ENCODE measurements at regions of chrX and their contacts with region 1.

Region 1: GRCh38 chrX:101931488-101932248 is at the start of gene ZMAT1:
- DNase-seq: peak; percentile 83 to 95 (median 93)
- ATAC-seq: peak; percentile 82
- H3K4me3 ChIP-seq: peak within 1 kb of the TSS; percentile 48 to 60
- H3K4me3 Mint-ChIP-seq: peak within 1 kb of the TSS; percentile 88
- H3K27ac ChIP-seq: peak within 1 kb of the TSS; percentile 59 to 82
- H3K27ac Mint-ChIP-seq: peak within 1 kb of the TSS; percentile 96
- H3K4me1 ChIP-seq: peaks cover 7% of the 10 kb centered on the region
- H3K4me1 Mint-ChIP-seq: peaks cover 31% of the 10 kb centered on the region
- H3K27me3 ChIP-seq: no peaks in the 10 kb centered on the region
- H3K27me3 Mint-ChIP-seq: no peaks in the 10 kb centered on the region
- CTCF ChIP-seq: no peak
- total RNA-seq, gene ZMAT1: 15.2 to 15.7 TPM

Region 2: GRCh38 chrX:100819837-100820666 is 1111.6 kb before region 1 on chrX and contains the start of gene CSTF2:
- CTCF ChIA-PET with region 1: no interaction called
- POLR2A ChIA-PET with region 1: no interaction called
- intact Hi-C with region 1: loop called (anchors 2 to 10 kb)
- DNase-seq: peak; percentile 53 to 90 (median 78)
- ATAC-seq: peak; percentile 95
- H3K4me3 ChIP-seq: peak within 1 kb of the TSS; percentile 65 to 83
- H3K4me3 Mint-ChIP-seq: peak within 1 kb of the TSS; percentile 90
- H3K27ac ChIP-seq: peak within 1 kb of the TSS; percentile 87 to 92
- H3K27ac Mint-ChIP-seq: peak within 1 kb of the TSS; percentile 90
- H3K4me1 ChIP-seq: no peaks in the 10 kb centered on the region
- H3K4me1 Mint-ChIP-seq: peaks cover 18% of the 10 kb centered on the region
- H3K27me3 ChIP-seq: no peaks in the 10 kb centered on the region
- H3K27me3 Mint-ChIP-seq: peaks cover 4% of the 10 kb centered on the region
- CTCF ChIP-seq: no peak
- total RNA-seq, gene CSTF2: 10.1 to 10.6 TPM

Region 3: GRCh38 chrX:100850317-100850716 is 1081.4 kb before region 1 on chrX:
- CTCF ChIA-PET with region 1: no interaction called
- POLR2A ChIA-PET with region 1: no interaction called
- intact Hi-C with region 1: no loop called
- DNase-seq: no peak
- ATAC-seq: no peak
- H3K4me3 ChIP-seq: no peak overlapping the region
- H3K4me3 Mint-ChIP-seq: no peak overlapping the region
- H3K27ac ChIP-seq: no peak overlapping the region
- H3K27ac Mint-ChIP-seq: no peak overlapping the region
- H3K4me1 ChIP-seq: no peaks in the 10 kb centered on the region
- H3K4me1 Mint-ChIP-seq: no peaks in the 10 kb centered on the region
- H3K27me3 ChIP-seq: no peaks in the 10 kb centered on the region
- H3K27me3 Mint-ChIP-seq: no peaks in the 10 kb centered on the region
- CTCF ChIP-seq: no peak

Region 4: DNA sequence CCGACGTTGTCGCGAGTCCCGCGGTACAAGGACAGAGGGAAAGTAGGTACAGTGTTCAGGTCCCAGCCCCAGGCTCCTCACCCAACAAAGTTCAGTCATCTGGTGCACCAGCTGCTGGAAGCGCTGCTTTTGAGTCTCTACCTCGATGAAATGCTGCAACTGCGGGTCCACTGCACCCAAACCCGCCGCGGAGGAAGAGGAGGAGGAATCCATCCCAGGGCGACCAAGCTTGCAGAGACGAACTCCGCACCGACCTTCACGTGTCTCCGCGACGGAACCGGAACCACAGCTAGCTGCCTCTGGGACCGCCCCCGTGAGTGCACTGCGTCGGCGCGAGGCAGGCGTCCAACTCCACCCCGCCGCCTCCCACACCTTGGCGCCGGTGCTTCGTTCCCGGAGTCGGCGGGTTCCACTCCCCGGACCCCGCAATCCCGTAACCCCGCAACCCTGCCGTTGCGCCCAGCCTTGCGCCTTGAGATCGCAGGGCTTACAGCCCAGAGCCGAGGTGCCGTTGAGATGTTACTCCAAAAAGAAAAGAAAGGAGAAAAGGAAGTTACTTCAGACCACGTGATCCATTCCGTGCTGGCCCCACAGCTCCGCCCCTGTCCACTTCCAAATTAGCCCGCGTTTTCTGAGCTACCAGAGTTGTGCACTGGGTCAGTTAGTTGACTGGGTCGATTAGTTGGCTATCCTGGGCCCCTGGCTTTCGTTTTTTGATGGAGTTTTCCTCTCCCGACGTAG is 583.0 kb before region 1 on chrX and contains the start of gene TIMM8A:
- CTCF ChIA-PET with region 1: no interaction called
- POLR2A ChIA-PET with region 1: no interaction called
- intact Hi-C with region 1: loop called in 1 of 2 experiments (anchors 5 kb)
- DNase-seq: peak; percentile 50 to 85 (median 77)
- ATAC-seq: peak; percentile 98
- H3K4me3 ChIP-seq: peak within 1 kb of the TSS; percentile 90 to 97
- H3K4me3 Mint-ChIP-seq: peak within 1 kb of the TSS; percentile 91
- H3K27ac ChIP-seq: peak within 1 kb of the TSS; percentile 78 to 90
- H3K27ac Mint-ChIP-seq: peak within 1 kb of the TSS; percentile 91
- H3K4me1 ChIP-seq: peaks cover 9% of the 10 kb centered on the region
- H3K4me1 Mint-ChIP-seq: peaks cover 16% of the 10 kb centered on the region
- H3K27me3 ChIP-seq: no peaks in the 10 kb centered on the region
- H3K27me3 Mint-ChIP-seq: no peaks in the 10 kb centered on the region
- CTCF ChIP-seq: no peak
- total RNA-seq, gene TIMM8A: 7.0 to 8.1 TPM

Region 5: DNA sequence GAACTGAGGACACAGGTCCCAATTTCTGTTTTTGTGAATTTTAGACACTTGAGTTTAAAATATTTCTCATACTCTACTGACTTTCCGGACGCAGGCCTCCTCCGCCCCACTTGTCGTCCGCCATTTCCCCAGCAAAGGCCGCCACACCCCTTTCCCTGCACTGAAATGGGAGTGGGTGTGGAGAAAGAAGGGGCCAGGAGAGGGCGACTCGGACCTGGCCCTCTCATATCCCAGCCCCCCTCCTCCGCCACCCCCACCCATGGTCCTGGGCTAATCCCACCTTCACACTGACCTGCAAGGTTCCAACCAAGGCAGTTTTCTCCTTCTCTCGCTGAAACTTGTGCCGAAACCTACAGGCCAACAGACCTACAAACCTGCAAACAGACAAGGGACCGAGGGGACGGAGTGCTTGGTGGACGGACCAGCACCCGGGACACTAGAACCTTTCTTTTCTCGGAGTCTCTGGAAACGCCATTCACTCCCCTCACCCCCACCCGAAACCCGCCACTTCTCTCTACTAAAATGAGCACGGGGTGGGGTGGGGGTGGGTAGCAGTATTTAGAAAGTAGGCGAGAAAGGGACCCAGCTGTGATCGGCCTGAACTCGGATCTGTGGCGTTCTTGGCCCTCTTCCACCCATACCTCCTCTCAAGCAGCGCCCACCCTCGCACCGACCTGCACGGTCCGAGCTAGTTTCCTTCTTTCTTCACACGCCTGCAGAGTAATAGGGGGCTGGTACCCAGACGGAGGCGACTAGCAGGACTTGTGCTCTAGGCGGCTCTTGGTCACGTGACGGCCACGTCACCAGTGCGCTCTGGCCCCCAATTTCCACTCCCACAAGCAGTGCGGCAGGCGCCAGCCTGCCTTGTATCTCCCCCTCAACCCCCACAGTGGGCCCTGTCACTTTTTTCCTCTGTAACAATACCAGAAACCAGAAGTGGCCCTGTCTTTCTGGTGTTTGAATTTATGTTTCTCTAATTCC is 314.2 kb before region 1 on chrX and contains the start of gene ARMCX6:
- CTCF ChIA-PET with region 1: no interaction called
- POLR2A ChIA-PET with region 1: no interaction called
- intact Hi-C with region 1: loop called in 1 of 2 experiments (anchors 5 kb)
- DNase-seq: peak; percentile 36 to 90 (median 72)
- ATAC-seq: peak; percentile 80
- H3K4me3 ChIP-seq: peak within 1 kb of the TSS; percentile 62 to 74
- H3K4me3 Mint-ChIP-seq: peak within 1 kb of the TSS; percentile 91
- H3K27ac ChIP-seq: peak within 1 kb of the TSS; percentile 59 to 63
- H3K27ac Mint-ChIP-seq: peak within 1 kb of the TSS; percentile 93
- H3K4me1 ChIP-seq: peaks cover 11% of the 10 kb centered on the region
- H3K4me1 Mint-ChIP-seq: peaks cover 16% of the 10 kb centered on the region
- H3K27me3 ChIP-seq: no peaks in the 10 kb centered on the region
- H3K27me3 Mint-ChIP-seq: no peaks in the 10 kb centered on the region
- CTCF ChIP-seq: no peak
- total RNA-seq, gene ARMCX6: 45.6 to 46.4 TPM

Region 6: GRCh38 chrX:101744085-101744484 is 187.6 kb before region 1 on chrX:
- CTCF ChIA-PET with region 1: no interaction called
- POLR2A ChIA-PET with region 1: no interaction called
- intact Hi-C with region 1: no loop called
- DNase-seq: no peak
- ATAC-seq: no peak
- H3K4me3 ChIP-seq: no peak overlapping the region
- H3K4me3 Mint-ChIP-seq: no peak overlapping the region
- H3K27ac ChIP-seq: no peak overlapping the region
- H3K27ac Mint-ChIP-seq: no peak overlapping the region
- H3K4me1 ChIP-seq: no peaks in the 10 kb centered on the region
- H3K4me1 Mint-ChIP-seq: no peaks in the 10 kb centered on the region
- H3K27me3 ChIP-seq: no peaks in the 10 kb centered on the region
- H3K27me3 Mint-ChIP-seq: peaks cover 7% of the 10 kb centered on the region
- CTCF ChIP-seq: no peak

Region 7: DNA sequence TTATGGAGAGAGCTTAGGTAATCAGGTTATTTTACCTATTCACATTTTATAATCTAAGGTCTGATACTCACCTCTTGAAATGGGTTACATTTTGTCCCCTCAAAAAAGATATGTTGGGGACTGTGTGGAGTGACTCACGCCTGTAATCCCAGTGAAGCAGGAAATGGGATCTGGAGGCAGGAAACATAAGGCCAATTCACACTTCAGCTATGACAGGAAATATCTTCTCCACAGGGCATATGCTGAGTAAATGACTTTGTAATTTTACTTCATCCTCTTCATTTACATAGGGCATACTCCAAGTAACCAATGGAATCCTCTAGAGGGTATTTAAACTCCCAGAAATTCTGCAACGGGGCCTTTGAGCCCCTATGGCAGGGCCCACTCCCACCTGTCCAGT is 54.9 kb after region 1 on chrX:
- CTCF ChIA-PET with region 1: no interaction called
- POLR2A ChIA-PET with region 1: no interaction called
- intact Hi-C with region 1: no loop called
- DNase-seq: no peak
- ATAC-seq: no peak
- H3K4me3 ChIP-seq: no peak overlapping the region
- H3K4me3 Mint-ChIP-seq: no peak overlapping the region
- H3K27ac ChIP-seq: no peak overlapping the region
- H3K27ac Mint-ChIP-seq: no peak overlapping the region
- H3K4me1 ChIP-seq: no peaks in the 10 kb centered on the region
- H3K4me1 Mint-ChIP-seq: no peaks in the 10 kb centered on the region
- H3K27me3 ChIP-seq: no peaks in the 10 kb centered on the region
- H3K27me3 Mint-ChIP-seq: no peaks in the 10 kb centered on the region
- CTCF ChIP-seq: no peak

Region 8: DNA sequence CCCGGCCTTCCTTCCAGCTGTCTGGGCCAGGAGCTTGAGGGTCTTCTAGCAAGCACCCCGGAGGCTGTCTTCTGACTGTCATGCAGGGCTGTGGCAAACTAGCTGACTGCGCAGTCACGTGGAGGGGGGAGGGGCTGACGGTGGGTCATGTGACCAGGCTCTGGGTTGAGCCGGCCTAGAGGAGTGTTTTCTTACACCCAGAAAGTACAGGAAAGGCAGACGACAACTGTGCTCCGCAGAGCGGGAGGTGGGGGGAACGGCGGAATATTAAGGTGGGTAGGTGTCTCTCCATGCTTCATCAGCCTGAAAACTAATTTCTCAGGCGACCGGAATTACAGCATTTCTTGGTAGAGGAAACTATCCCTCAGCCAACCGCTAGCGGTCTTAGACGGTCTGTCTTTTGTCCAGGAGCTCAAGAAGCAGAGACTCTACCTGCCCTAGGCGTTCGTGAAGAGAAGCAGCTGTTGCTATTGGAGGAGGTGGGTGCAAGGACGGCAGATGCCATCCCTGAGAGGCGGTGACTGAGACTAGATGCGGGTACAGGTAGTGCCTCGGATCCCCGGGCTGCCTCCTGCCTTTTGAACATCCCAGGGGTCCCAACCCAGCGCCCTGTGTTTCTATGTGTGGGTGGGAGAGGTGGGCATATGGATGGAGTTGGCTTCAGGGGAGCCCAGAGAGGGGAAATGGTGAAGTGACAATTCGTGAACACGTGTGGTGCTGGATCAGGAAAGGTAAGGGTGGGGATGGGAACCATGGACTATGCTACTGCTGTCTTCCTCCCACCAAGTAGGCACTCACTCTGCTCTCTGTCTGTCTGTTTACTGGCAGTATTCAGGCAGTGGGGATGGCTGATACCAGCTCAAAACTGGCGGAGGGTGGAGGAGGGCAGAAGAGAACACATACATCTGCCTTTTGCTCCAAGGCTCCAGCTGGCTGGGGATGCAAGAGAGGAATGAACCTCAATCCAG is 728.4 kb after region 1 on chrX:
- CTCF ChIA-PET with region 1: no interaction called
- POLR2A ChIA-PET with region 1: no interaction called
- intact Hi-C with region 1: loop called in 1 of 2 experiments (anchors 2 kb)
- DNase-seq: peak; percentile 57 to 87 (median 83)
- ATAC-seq: peak; percentile 96
- H3K4me3 ChIP-seq: peak overlapping the region; percentile 40 to 56
- H3K4me3 Mint-ChIP-seq: peak overlapping the region; percentile 85
- H3K27ac ChIP-seq: peak overlapping the region; percentile 40 to 66
- H3K27ac Mint-ChIP-seq: peak overlapping the region; percentile 95
- H3K4me1 ChIP-seq: no peaks in the 10 kb centered on the region
- H3K4me1 Mint-ChIP-seq: peaks cover 51% of the 10 kb centered on the region
- H3K27me3 ChIP-seq: no peaks in the 10 kb centered on the region
- H3K27me3 Mint-ChIP-seq: no peaks in the 10 kb centered on the region
- CTCF ChIP-seq: no peak

Region 9: DNA sequence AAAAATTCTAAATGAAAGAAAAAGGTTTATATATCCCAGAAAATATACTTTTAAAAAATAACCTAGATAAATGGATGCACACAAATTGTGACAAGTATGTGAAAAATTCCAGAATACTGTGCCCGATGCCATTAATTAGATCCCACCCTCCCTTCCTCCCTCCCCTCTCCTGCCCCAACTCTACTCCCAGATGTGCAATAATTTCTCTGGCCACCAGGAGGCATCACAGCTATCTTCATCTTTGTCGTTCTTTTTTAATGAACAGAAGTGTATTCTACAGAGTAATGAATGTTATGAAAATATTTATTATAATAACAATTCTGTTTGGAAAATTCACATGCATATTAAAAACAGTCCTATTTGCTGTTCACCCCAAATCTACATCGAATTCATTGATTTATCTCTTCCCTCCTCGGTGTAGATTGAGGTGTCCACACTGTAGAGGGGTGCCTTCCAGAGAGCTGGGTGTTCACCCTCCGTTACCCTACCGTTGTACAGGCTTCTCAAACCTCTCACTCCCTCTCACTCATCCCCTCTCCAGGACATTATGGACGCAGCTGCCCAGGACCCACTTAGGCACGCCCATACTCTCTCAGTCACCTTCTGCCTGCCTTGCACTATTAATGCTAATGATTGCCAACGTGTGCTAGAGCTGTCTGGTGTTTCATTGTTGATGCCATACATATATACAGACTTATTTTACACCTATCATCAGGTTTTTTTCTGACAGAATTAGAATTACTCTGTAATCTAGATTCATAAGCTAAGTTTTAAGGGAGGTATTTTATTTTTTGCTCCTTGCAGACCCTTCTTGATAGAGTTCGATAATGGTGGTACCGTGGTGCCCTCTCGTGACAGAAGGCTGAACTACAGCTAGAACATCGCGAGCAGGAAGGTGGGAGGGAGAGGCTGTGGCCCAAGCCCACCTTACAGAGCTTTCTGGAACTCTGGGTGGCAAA is 1019.5 kb after region 1 on chrX:
- CTCF ChIA-PET with region 1: no interaction called
- POLR2A ChIA-PET with region 1: no interaction called
- intact Hi-C with region 1: no loop called
- DNase-seq: peak; percentile 9 to 63 (median 54)
- ATAC-seq: peak; percentile 77
- H3K4me3 ChIP-seq: peak overlapping the region; percentile 17 to 33
- H3K4me3 Mint-ChIP-seq: peak overlapping the region; percentile 79
- H3K27ac ChIP-seq: no peak overlapping the region
- H3K27ac Mint-ChIP-seq: no peak overlapping the region
- H3K4me1 ChIP-seq: no peaks in the 10 kb centered on the region
- H3K4me1 Mint-ChIP-seq: peaks cover 3% of the 10 kb centered on the region
- H3K27me3 ChIP-seq: no peaks in the 10 kb centered on the region
- H3K27me3 Mint-ChIP-seq: no peaks in the 10 kb centered on the region
- CTCF ChIP-seq: peak; percentile 66

Region 10: GRCh38 chrX:103918581-103919269 is 1987.1 kb after region 1 on chrX:
- CTCF ChIA-PET with region 1: no interaction called
- POLR2A ChIA-PET with region 1: interaction called, 3 read pairs
- intact Hi-C with region 1: loop called in 1 of 2 experiments (anchors 5 kb)
- DNase-seq: peak; percentile 5 to 77 (median 48)
- ATAC-seq: peak; percentile 74
- H3K4me3 ChIP-seq: peak overlapping the region; percentile 62 to 71
- H3K4me3 Mint-ChIP-seq: peak overlapping the region; percentile 90
- H3K27ac ChIP-seq: peak overlapping the region; percentile 65 to 76
- H3K27ac Mint-ChIP-seq: peak overlapping the region; percentile 90
- H3K4me1 ChIP-seq: peaks cover 12% of the 10 kb centered on the region
- H3K4me1 Mint-ChIP-seq: peaks cover 29% of the 10 kb centered on the region
- H3K27me3 ChIP-seq: no peaks in the 10 kb centered on the region
- H3K27me3 Mint-ChIP-seq: no peaks in the 10 kb centered on the region
- CTCF ChIP-seq: no peak

Measured in CD8-positive, alpha-beta T cell (primary cell).